GM12878 (cell line): ENCODE measurements at regions of chr18 and their contacts with region 1.

Region 1: DNA sequence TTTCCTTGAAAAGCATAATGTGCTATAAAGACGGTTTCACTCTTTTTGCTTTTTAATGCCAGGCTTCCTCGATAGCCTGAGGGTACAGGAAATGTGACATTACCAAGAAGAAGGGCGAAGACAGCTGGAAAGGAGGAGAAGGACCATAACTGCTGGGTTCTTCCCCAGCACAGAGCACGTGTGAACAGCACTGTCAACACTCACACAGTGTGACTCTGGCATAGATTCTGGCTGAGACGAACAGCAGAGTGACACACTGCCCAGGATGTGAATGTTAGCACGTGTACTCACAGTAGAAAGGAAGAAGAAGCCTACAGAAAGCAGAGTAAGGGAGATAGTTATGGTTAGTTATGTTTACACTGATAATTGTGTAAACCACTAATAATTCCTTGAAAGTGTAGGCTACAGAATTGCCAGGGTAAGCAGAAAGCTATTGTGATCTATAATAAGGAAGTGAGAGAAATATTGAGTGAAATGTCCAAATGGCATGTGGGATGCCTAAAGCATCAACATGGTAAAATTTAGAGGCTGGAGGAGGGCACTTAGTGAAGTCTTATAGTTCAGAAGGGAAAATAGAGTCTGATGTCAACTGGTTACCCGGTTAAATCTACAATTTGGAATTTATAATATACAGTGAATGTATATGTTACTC is 198.2 kb downstream of the DLGAP1 start:
- DNase-seq: no peak
- ATAC-seq: peak; percentile 32
- H3K4me3 ChIP-seq: no peak overlapping the region
- H3K27ac ChIP-seq: peak overlapping the region; percentile 20; the same call in 1 of the 2 replicates
- H3K4me1 ChIP-seq: no peaks in the 10 kb centered on the region
- H3K27me3 ChIP-seq: no peaks in the 10 kb centered on the region
- CTCF ChIP-seq: no peak
- EP300 ChIP-seq: no peak
- POLR2A ChIP-seq: no peak
- RAD21 ChIP-seq: no peak

Region 2: DNA sequence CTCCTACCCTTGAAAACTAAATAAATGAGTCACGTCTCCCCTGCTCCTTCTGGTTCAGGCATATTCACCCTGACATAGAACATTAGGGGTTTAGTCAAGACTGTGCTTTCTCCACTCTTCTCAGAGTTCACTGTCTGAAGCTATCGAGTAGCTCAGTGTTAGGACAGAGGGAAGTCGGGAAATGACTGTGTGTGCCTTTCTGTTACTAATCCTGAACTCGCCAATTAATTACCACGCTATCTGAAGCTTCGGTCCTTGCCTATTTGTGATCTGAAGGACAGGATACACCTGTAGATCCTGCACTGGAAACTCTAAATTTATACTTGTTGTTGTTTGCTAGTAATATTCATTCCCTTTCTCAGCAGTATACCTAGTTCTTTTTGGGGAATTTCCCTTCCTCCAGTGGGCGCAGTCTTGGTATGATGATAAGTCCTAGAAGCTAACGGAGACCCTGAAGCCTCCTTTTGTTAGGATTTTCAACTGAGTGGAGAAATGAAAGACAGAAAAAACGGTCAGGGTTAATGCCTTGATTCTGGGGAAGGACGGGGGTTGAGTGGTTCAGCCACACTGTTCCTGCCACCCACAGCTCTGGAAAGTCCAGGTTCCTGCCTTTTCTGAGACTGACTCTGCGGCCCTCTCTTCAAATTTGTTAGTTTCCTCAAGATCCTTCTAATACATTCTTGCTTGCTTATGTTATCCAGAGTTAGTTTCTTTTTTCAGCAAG is 19.8 kb before region 1 on chr18:
- CTCF ChIA-PET with region 1: interaction called, 8 read pairs
- POLR2A ChIA-PET with region 1: interaction called, 29 read pairs
- RAD21 ChIA-PET with region 1: interaction called, 82 read pairs
- SMC1A ChIA-PET with region 1: interaction called, 222 read pairs
- in situ Hi-C with region 1: no loop called
- intact Hi-C with region 1: no loop called
- DNase-seq: no peak
- ATAC-seq: peak; percentile 77
- H3K4me3 ChIP-seq: no peak overlapping the region
- H3K27ac ChIP-seq: no peak overlapping the region
- H3K4me1 ChIP-seq: no peaks in the 10 kb centered on the region
- H3K27me3 ChIP-seq: no peaks in the 10 kb centered on the region
- CTCF ChIP-seq: no peak
- EP300 ChIP-seq: peak; percentile 28 to 41; a peak in 1 of 4 replicates
- POLR2A ChIP-seq: no peak
- RAD21 ChIP-seq: no peak

Region 3: DNA sequence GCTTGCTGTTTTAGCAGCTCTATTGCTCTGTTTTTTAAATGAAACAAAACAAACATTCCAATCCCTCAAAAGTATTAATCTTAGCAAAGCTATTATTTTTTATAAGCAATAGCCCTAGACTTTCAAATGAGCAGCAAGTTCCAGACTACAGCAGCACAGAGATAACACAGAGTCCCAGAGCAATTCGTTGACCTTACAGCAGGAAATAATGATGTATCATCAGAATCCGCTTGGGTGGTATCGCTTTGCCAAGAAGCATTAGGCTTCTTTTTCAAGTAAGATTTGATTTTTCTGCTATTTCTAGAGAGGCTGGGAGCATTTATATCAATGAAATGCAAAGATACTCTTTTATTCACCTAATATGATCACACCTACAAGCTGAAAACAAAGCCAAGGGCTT is 11.4 kb before region 1 on chr18:
- CTCF ChIA-PET with region 1: interaction called, 17 read pairs
- POLR2A ChIA-PET with region 1: interaction called, 20 read pairs
- RAD21 ChIA-PET with region 1: interaction called, 41 read pairs
- SMC1A ChIA-PET with region 1: interaction called, 66 read pairs
- in situ Hi-C with region 1: no loop called
- intact Hi-C with region 1: no loop called
- DNase-seq: no peak
- ATAC-seq: no peak
- H3K4me3 ChIP-seq: no peak overlapping the region
- H3K27ac ChIP-seq: no peak overlapping the region
- H3K4me1 ChIP-seq: no peaks in the 10 kb centered on the region
- H3K27me3 ChIP-seq: no peaks in the 10 kb centered on the region
- CTCF ChIP-seq: no peak
- EP300 ChIP-seq: no peak
- POLR2A ChIP-seq: no peak
- RAD21 ChIP-seq: no peak

Region 4: DNA sequence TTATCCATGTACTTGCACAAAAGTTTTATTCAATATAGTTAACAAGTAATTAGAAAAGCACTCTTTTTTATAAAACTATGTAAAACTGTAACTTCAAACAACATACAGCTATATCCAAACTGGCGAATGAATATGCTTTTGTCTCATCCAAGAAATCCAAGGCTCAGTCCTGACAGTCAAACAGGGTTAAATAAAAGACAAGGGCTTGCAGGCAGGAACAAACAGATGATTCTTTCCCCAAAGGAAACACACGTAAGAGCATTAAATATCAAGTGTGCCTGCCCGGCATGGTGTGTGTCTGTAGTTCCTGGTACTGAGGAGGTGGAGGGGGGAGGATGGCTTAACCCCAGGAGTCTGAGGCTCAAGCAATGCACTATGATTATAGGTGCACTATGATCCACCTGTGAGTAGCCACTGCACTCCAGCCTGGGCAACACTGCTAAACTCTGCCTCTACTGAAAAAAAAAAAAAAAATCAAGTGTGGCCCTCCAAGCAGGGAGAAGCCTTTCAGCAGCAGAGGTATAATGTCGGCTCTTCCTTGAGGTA is 26.9 kb after region 1 on chr18:
- CTCF ChIA-PET with region 1: interaction called, 3 read pairs
- POLR2A ChIA-PET with region 1: interaction called, 5 read pairs
- RAD21 ChIA-PET with region 1: interaction called, 12 read pairs
- SMC1A ChIA-PET with region 1: interaction called, 21 read pairs
- in situ Hi-C with region 1: no loop called
- intact Hi-C with region 1: no loop called
- DNase-seq: no peak
- ATAC-seq: peak; percentile 45
- H3K4me3 ChIP-seq: no peak overlapping the region
- H3K27ac ChIP-seq: no peak overlapping the region
- H3K4me1 ChIP-seq: no peaks in the 10 kb centered on the region
- H3K27me3 ChIP-seq: no peaks in the 10 kb centered on the region
- CTCF ChIP-seq: no peak
- EP300 ChIP-seq: no peak
- POLR2A ChIP-seq: no peak
- RAD21 ChIP-seq: no peak